BJ (cell line): ENCODE measurements at regions of chr17 and their contacts with region 1.

Region 1: DNA sequence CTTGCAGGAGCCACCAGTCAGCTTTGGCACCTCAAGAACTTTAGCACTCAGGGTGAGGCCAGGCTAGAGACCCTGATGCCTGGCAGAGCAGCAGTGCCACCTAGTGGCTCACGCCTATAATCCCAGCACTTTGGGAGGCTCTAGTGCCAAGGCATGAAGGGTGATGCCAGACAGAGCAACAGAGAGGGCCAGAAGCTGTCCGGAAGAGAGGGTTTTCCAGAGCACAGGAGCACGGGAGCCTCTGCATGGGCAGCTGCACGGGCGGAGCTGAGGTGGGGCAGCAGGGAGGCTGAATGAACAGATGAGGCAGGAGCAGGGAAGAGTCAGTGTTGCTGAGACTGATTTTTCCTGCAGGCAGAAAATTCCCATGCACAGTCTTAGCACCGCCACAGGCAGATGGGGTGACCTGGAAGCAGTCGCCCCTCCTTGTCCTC is 38.9 kb downstream of the MYH3 start:
- DNase-seq: no peak
- H3K4me3 ChIP-seq: no peak overlapping the region
- H3K27me3 ChIP-seq: no peaks in the 10 kb centered on the region
- CTCF ChIP-seq: peak; percentile 95

Region 2: GRCh38 chr17:9924735-9925191 is 693.5 kb before region 1 on chr17:
- CTCF ChIA-PET with region 1: interaction called, 98 read pairs
- POLR2A ChIA-PET with region 1: no interaction called
- DNase-seq: no peak
- H3K4me3 ChIP-seq: no peak overlapping the region
- H3K27me3 ChIP-seq: peaks cover 3% of the 10 kb centered on the region; the same call in 1 of the 2 replicates
- CTCF ChIP-seq: peak; percentile 82

Region 3: DNA sequence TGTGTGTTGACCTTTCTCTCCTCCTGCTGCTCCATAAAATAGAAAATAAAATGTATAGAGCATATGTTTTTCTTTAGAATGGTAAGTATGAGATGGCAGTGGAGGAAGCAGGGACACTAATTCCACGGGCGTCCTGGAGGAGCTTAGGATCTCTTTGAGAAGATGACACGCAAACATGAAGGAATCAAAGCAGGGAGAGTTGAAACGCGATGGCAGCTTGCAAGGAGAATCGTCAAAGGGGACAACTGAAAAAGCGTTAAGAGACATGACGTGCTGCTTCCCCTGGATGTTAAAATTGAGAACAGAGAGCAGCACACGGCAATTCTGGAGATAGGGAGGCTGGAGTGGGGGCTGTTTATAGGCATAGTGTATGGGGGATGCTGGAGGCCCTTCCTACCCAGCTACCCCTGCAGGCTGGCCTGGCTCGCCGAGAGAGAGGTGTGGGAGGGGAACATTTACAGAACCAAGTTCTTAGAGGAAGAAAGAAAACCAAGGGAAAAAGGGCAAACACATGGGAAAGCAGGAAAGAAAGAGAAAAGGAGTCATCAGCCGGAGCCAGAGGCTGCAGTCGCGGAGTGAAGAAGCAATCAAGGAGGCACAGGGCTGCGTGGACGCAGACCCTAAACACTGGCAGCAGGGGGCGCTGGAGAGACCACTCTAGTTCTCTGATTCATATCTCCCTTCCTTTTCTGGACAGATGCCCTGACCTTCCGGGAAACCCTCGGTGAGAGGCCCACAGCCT is 301.2 kb before region 1 on chr17:
- CTCF ChIA-PET with region 1: interaction called, 53 read pairs
- POLR2A ChIA-PET with region 1: no interaction called
- DNase-seq: no peak
- H3K4me3 ChIP-seq: no peak overlapping the region
- H3K27me3 ChIP-seq: no peaks in the 10 kb centered on the region
- CTCF ChIP-seq: peak; percentile 66

Region 4: DNA sequence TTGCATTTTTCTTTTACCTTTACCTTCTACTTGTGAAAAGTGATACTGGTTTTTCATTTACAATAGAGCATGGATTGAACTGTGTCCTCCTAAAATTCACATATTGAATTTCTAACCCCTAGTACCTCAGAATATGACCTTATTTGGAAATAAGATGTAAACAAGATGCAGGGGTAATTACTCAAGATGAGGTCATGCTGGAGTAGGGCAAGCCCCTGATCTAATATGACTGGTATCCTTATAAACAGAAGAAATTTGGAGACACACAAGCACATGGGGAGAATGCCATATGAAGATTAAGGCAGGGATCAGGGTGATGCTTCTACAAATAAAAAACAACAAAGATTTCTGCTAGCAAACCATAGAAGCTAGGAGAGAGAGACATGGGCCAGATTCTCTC is 257.6 kb before region 1 on chr17:
- CTCF ChIA-PET with region 1: no interaction called
- POLR2A ChIA-PET with region 1: no interaction called
- DNase-seq: no peak
- H3K4me3 ChIP-seq: no peak overlapping the region
- H3K27me3 ChIP-seq: no peaks in the 10 kb centered on the region
- CTCF ChIP-seq: no peak

Region 5: DNA sequence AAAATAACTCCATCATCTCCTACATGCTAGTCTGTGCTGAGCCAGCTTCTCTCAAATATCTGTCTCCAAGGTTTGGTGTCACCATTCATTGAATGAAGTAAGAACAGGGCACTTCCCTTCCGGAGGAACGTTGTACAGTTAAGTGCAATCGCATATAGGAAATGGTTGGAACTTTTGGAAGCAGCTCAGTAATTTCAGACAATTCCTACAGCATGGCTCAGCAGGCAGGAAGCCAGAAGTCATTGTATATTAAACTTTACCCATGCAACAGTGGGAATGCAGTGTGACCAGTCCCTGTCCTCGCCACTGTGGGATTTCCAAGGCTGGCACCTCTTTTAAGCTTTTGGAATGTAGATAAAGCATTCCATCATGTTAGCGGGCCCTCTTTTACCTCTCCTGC is 17.6 kb before region 1 on chr17:
- CTCF ChIA-PET with region 1: interaction called, 76 read pairs
- POLR2A ChIA-PET with region 1: no interaction called
- DNase-seq: peak; percentile 6
- H3K4me3 ChIP-seq: no peak overlapping the region
- H3K27me3 ChIP-seq: no peaks in the 10 kb centered on the region
- CTCF ChIP-seq: no peak